ENCODE measurements at regions of chr15 and their contacts with region 1.

Region 1: GRCh38 chr15:54082836-54083492 is 104.7 kb downstream of the UNC13C start:
- DNase-seq: no peak
- ATAC-seq: no peak

Region 2: GRCh38 chr15:55108858-55109518 is 1026.0 kb after region 1 on chr15:
- intact Hi-C with region 1: loop called (anchors 5 kb)
- DNase-seq: peak; percentile 80
- ATAC-seq: no peak

Measured in Right ventricle myocardium inferior (tissue), 1 donor.